Activated T-helper 1 cell treated with anti-CD3 and anti-CD28 coated beads, Interleukin-12 subunit alpha, Interleukin-12 subunit beta, Interleukin-2, Interleukin-4 antibody, amounts not matched to agents 30 ng/mL and 10 ng/mL and 1 ng/mL, durations not matched to agents 14 hours and 24 hours and 36 hours (primary cell): ENCODE measurements at regions of chr3 and their contacts with region 1.

Region 1: DNA sequence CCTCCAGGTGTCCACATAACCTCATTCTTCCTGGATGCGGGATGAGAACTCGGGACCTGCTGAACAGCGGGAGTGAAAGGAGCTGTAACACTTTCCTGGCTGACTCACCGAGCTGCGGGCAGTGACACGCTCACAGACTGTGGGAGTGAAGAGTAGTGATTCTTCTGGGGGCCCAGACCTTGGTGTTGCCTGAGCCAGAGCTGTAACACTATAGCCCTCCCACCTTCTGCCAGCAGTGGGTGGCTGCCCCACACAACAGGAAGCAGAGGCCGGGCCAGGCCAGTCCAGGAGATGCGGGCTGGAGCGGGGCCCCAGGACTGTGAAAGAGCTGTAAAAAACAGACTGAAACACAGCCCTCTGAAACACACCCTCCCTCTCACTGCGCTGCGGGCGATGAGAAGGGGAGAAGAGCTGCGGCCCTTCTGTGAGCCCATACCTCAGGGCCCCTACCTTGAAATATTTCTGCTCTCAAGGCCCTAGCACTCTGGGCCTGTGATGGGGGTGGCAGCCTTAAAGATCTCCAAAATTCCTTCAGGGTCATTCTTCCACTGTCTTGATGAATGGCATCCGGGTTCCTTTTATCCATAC is 464.0 kb upstream of the CCDC54 start:
- DNase-seq: no peak
- H3K4me3 Mint-ChIP-seq: no peak overlapping the region
- H3K27ac Mint-ChIP-seq: no peak overlapping the region
- H3K4me1 Mint-ChIP-seq: no peaks in the 10 kb centered on the region
- H3K27me3 Mint-ChIP-seq: peaks cover 3% of the 10 kb centered on the region

Region 2: GRCh38 chr3:106025151-106025722 is 888.0 kb before region 1 on chr3:
- intact Hi-C with region 1: no loop called
- DNase-seq: no peak
- H3K4me3 Mint-ChIP-seq: no peak overlapping the region
- H3K27ac Mint-ChIP-seq: no peak overlapping the region
- H3K4me1 Mint-ChIP-seq: peaks cover 7% of the 10 kb centered on the region
- H3K27me3 Mint-ChIP-seq: no peaks in the 10 kb centered on the region

Region 3: DNA sequence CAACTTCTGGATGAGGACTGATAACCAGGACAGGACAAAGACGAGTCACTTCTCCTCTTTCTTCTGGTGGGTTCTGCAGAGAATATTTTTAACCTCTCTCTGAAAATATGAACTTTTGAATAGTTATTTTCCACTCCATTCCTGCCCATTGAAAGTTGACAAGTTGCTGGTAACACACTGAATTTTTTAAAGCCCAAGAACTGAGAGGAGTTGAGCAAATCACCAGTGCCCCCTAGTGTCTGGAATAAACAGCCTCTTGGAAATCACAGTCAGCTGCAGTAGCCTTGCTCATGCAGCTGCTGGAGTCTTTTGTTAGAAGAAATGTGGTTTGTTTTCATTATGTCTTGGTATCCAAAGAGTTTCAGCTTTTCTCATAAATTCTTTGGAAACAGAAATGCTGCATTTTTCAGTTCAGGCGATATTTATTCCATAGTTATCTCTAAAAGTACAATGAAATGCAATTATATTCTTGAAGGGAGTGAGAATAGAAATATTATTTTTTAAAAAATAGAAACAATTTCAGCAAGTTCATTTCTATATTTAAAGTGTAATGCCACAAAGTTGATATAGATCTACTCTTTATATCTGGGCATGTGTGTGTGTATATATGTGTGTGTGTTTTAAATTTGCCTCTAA is 303.4 kb before region 1 on chr3:
- intact Hi-C with region 1: no loop called
- DNase-seq: peak; percentile 50
- H3K4me3 Mint-ChIP-seq: no peak overlapping the region
- H3K27ac Mint-ChIP-seq: peak overlapping the region; percentile 66
- H3K4me1 Mint-ChIP-seq: peaks cover 30% of the 10 kb centered on the region
- H3K27me3 Mint-ChIP-seq: no peaks in the 10 kb centered on the region

Region 4: DNA sequence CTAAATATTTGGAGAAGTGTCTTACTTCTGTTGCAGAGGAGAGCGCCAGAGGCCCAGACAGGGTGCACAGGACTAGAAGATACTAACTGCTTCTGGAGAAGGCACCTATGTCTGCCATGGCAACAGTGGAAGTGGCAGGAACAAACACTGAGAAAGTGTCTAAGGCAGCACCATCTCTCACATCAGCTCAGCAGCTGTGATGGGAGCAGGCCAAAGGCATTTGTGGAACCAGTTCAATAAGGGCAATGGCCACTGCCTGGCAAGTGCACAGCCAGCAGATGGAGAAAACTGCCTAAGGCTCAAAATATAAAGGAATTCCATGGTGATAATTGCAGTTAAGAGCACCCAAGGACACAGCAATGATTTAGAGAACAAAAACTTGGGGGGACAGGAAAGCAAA is 99.0 kb before region 1 on chr3:
- intact Hi-C with region 1: no loop called
- DNase-seq: no peak
- H3K4me3 Mint-ChIP-seq: no peak overlapping the region
- H3K27ac Mint-ChIP-seq: no peak overlapping the region
- H3K4me1 Mint-ChIP-seq: no peaks in the 10 kb centered on the region
- H3K27me3 Mint-ChIP-seq: peaks cover 2% of the 10 kb centered on the region

Region 5: GRCh38 chr3:106880206-106880605 is 33.0 kb before region 1 on chr3:
- intact Hi-C with region 1: loop called (anchors 1 kb)
- DNase-seq: no peak
- H3K4me3 Mint-ChIP-seq: no peak overlapping the region
- H3K27ac Mint-ChIP-seq: no peak overlapping the region
- H3K4me1 Mint-ChIP-seq: no peaks in the 10 kb centered on the region
- H3K27me3 Mint-ChIP-seq: no peaks in the 10 kb centered on the region